Caco-2 (cell line): ENCODE measurements at regions of chr7 and their contacts with region 1.

Region 1: GRCh38 chr7:43454936-43455518 is 127.9 kb upstream of the STK17A start:
- DNase-seq: peak in 1 of 2 experiments; percentile 28
- H3K4me3 ChIP-seq: no peak overlapping the region
- H3K4me3 Mint-ChIP-seq: no peak overlapping the region
- H3K27ac Mint-ChIP-seq: no peak overlapping the region
- H3K4me1 ChIP-seq: peaks cover 13% of the 10 kb centered on the region; the same call in 1 of the 2 replicates
- H3K4me1 Mint-ChIP-seq: peaks cover 21% of the 10 kb centered on the region
- H3K27me3 ChIP-seq: no peaks in the 10 kb centered on the region
- H3K27me3 Mint-ChIP-seq: no peaks in the 10 kb centered on the region
- CTCF ChIP-seq: peak; percentile 45 to 50

Region 2: DNA sequence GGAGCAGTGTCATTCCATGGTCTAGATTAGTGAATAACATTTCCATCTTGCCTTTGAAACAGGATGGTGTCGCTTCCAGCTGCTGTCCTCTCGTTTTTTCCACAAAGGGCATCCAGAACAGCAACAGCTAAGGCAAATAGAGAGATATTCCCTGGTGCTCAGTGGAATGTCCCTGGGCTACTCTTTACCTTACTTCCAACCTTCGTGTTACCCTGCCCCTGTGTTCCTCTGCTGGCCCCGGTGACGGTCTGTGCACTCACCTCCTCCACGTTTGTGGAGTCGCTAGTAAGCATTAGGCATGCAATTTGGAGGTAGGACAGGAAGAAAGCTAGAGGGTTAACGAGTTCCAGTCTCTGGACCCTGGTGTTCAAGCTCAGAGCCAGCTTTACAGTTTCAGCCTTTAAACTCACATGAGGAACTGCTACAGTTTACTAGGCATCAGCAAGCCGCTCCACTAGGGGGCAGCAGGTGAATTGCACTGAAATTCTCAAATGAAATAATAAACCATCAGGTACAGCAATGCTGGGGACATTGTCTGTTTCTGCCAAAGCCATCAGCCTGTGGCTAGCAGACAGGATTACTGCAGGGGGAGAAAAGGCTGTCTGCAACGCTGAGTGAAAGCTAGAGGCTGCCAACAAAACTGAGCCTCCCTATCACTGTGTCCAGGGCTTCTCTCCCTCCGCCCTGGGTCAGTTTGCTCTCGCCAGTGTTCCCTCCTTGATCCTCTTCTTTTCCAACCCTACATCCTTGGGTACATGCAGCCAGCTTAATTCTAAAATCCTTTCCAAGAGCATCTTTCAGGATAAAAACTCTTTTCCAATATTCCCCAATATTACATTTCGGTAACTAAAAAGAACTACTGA is 513.8 kb before region 1 on chr7:
- CTCF ChIA-PET with region 1: no interaction called
- POLR2A ChIA-PET with region 1: no interaction called
- intact Hi-C with region 1: loop called (anchors 5 kb)
- DNase-seq: peak; percentile 74 to 78
- H3K4me3 ChIP-seq: no peak overlapping the region
- H3K4me3 Mint-ChIP-seq: no peak overlapping the region
- H3K27ac Mint-ChIP-seq: no peak overlapping the region
- H3K4me1 ChIP-seq: no peaks in the 10 kb centered on the region
- H3K4me1 Mint-ChIP-seq: no peaks in the 10 kb centered on the region
- H3K27me3 ChIP-seq: no peaks in the 10 kb centered on the region
- H3K27me3 Mint-ChIP-seq: no peaks in the 10 kb centered on the region
- CTCF ChIP-seq: peak; percentile 86 to 91

Region 3: GRCh38 chr7:43511029-43511428 is 56.0 kb after region 1 on chr7:
- CTCF ChIA-PET with region 1: interaction called, 8 read pairs
- POLR2A ChIA-PET with region 1: no interaction called
- intact Hi-C with region 1: loop called (anchors 2 kb)
- DNase-seq: peak; percentile 50 to 52
- H3K4me3 ChIP-seq: no peak overlapping the region
- H3K4me3 Mint-ChIP-seq: no peak overlapping the region
- H3K27ac Mint-ChIP-seq: no peak overlapping the region
- H3K4me1 ChIP-seq: 0 out of 2 replicates have a peak, but pooled peaks cover 6% of the 10 kb centered on the region
- H3K4me1 Mint-ChIP-seq: peaks cover 7% of the 10 kb centered on the region
- H3K27me3 ChIP-seq: no peaks in the 10 kb centered on the region
- H3K27me3 Mint-ChIP-seq: no peaks in the 10 kb centered on the region
- CTCF ChIP-seq: peak; percentile 38 to 51

Region 4: GRCh38 chr7:43700059-43700501 is 245.1 kb after region 1 on chr7:
- CTCF ChIA-PET with region 1: interaction called, 6 read pairs
- POLR2A ChIA-PET with region 1: no interaction called
- intact Hi-C with region 1: loop called (anchors 1 kb)
- DNase-seq: peak in 1 of 2 experiments; percentile 26
- H3K4me3 ChIP-seq: no peak overlapping the region
- H3K4me3 Mint-ChIP-seq: no peak overlapping the region
- H3K27ac Mint-ChIP-seq: no peak overlapping the region
- H3K4me1 ChIP-seq: 0 out of 2 replicates have a peak, but pooled peaks cover under 1% of the 10 kb centered on the region
- H3K4me1 Mint-ChIP-seq: no peaks in the 10 kb centered on the region
- H3K27me3 ChIP-seq: no peaks in the 10 kb centered on the region
- H3K27me3 Mint-ChIP-seq: no peaks in the 10 kb centered on the region
- CTCF ChIP-seq: peak; percentile 56 to 57